ENCODE measurements at regions of chr1 and their contacts with region 1.

Region 1: DNA sequence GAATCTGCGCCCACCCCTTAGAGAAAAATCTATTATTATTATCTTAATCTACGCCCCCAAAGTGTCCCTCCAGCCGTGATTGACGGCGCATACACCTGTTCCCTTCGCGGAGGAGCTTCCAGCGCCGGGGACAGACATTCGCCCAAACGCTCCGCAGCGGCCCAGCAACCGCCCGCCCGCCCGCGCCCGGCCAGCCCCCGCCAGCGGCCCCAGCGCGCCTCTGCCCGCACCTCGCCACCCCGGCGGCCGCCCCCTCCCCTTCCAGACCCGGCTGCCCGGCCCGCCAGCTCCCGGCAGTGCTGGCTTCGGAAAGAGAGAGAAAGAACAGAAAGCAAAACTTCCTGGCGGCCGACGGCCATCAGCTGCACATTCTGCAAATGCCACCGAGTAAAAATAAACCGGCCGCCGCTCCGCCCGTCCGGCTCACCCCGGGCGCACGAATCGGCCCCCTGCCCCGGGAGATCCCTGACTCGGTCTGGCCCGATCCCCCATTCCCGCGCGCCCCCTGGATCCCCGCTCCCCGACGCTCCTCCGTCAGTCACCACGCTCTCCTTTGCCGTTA is 1.7 kb downstream of the CASZ1 start:
- DNase-seq: peak; percentile 57
- ATAC-seq: peak; percentile 13; the same call in 1 of the 2 replicates
- H3K4me3 Mint-ChIP-seq: peak overlapping the region; percentile 71
- H3K27ac Mint-ChIP-seq: no peak overlapping the region
- H3K4me1 Mint-ChIP-seq: peaks cover 26% of the 10 kb centered on the region
- H3K27me3 Mint-ChIP-seq: peaks cover 47% of the 10 kb centered on the region
- CTCF ChIP-seq: no peak

Region 2: GRCh38 chr1:10860682-10861081 is 65.9 kb after region 1 on chr1:
- CTCF ChIA-PET with region 1: interaction called, 10 read pairs
- POLR2A ChIA-PET with region 1: no interaction called
- DNase-seq: no peak
- ATAC-seq: peak; percentile 23; the same call in 1 of the 2 replicates
- H3K4me3 Mint-ChIP-seq: no peak overlapping the region
- H3K27ac Mint-ChIP-seq: no peak overlapping the region
- H3K4me1 Mint-ChIP-seq: peaks cover 47% of the 10 kb centered on the region
- H3K27me3 Mint-ChIP-seq: peaks cover 17% of the 10 kb centered on the region
- CTCF ChIP-seq: no peak

Measured in WTC11 (cell line).